K562 (cell line): ENCODE measurements at regions of chr6 and their contacts with region 1.

Region 1: DNA sequence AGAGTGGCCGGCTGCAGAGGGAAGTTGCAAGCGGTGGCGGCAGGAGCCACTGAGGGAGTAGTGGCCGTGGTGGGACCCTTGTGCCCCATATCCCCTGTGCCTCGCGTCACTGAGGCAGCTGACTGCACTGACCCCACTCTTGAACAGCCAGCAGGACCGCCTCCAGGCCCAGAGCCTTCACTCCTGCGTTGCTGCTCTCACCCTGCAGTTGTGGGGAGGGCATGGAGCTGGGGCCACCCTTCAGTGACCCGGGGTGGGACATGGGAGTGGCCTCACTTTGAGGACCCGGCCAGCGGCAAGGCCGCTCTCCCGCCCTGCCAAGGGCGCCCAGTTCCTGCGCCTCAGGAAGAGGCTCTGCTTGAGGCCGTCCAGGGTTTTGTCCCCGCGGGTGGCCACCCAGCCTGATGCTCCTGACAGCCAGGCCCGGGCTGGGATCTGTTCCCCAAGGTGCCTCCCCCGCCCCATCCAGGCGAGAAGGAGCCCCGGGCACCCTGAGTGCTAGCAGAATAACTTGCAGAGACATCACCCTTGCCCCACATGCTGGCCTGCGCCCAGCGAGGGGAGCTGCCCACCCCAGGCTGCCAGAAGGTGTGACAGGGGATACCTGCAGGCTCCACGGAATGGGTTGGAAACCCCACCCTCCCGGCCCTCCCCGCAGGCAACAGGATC is 44.4 kb downstream of the HLA-DRA start:
- DNase-seq: peak in 1 of 4 experiments; percentile 5
- ATAC-seq: peak; percentile 43; the same call in 1 of the 3 replicates
- H3K4me3 ChIP-seq: no peak overlapping the region
- H3K27ac ChIP-seq: no peak overlapping the region
- H3K4me1 ChIP-seq: peaks cover 0 to 5% of the 10 kb centered on the region in 2 experiments; a peak in 1 of 5 replicates
- H3K27me3 ChIP-seq: peaks cover 2 to 12% of the 10 kb centered on the region in 2 experiments; a peak in 2 of 5 replicates
- CTCF ChIP-seq: no peak
- EP300 ChIP-seq: no peak
- POLR2A ChIP-seq: no peak
- RAD21 ChIP-seq: no peak

Region 2: DNA sequence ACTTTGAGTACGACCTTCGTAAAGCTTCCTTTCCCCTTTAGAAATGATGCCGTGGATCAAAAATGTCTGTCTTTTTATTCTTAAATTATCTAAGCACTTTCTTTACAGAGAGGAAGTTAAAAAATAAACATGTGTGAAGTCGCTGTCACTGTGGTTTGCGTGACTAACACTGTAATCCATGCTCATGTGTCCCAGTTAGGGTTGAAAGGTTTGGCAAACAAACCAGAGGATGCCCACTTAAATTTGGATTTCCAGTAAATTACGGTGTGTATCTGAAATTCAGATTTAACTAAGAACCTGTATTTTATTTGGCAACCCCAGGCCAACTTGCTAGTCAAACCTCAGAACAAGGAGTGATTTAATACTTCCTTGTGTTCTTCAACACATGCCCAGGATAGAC is 84.5 kb after region 1 on chr6:
- CTCF ChIA-PET with region 1: no interaction called
- POLR2A ChIA-PET with region 1: no interaction called
- in situ Hi-C with region 1: loop called (anchors 5 kb)
- intact Hi-C with region 1: loop called (anchors 10 kb)
- DNase-seq: no peak
- ATAC-seq: no peak
- H3K4me3 ChIP-seq: no peak overlapping the region
- H3K27ac ChIP-seq: no peak overlapping the region
- H3K4me1 ChIP-seq: no peaks in the 10 kb centered on the region
- H3K27me3 ChIP-seq: no peaks in the 10 kb centered on the region
- CTCF ChIP-seq: no peak
- EP300 ChIP-seq: no peak
- POLR2A ChIP-seq: no peak
- RAD21 ChIP-seq: no peak

Region 3: GRCh38 chr6:32576250-32576649 is 92.1 kb after region 1 on chr6:
- CTCF ChIA-PET with region 1: no interaction called
- POLR2A ChIA-PET with region 1: no interaction called
- in situ Hi-C with region 1: no loop called
- intact Hi-C with region 1: loop called (anchors 10 kb)
- DNase-seq: no peak
- ATAC-seq: no peak
- H3K4me3 ChIP-seq: no peak overlapping the region
- H3K27ac ChIP-seq: no peak overlapping the region
- H3K4me1 ChIP-seq: no peaks in the 10 kb centered on the region
- H3K27me3 ChIP-seq: no peaks in the 10 kb centered on the region
- CTCF ChIP-seq: no peak
- EP300 ChIP-seq: no peak
- POLR2A ChIP-seq: no peak
- RAD21 ChIP-seq: no peak

Region 4: DNA sequence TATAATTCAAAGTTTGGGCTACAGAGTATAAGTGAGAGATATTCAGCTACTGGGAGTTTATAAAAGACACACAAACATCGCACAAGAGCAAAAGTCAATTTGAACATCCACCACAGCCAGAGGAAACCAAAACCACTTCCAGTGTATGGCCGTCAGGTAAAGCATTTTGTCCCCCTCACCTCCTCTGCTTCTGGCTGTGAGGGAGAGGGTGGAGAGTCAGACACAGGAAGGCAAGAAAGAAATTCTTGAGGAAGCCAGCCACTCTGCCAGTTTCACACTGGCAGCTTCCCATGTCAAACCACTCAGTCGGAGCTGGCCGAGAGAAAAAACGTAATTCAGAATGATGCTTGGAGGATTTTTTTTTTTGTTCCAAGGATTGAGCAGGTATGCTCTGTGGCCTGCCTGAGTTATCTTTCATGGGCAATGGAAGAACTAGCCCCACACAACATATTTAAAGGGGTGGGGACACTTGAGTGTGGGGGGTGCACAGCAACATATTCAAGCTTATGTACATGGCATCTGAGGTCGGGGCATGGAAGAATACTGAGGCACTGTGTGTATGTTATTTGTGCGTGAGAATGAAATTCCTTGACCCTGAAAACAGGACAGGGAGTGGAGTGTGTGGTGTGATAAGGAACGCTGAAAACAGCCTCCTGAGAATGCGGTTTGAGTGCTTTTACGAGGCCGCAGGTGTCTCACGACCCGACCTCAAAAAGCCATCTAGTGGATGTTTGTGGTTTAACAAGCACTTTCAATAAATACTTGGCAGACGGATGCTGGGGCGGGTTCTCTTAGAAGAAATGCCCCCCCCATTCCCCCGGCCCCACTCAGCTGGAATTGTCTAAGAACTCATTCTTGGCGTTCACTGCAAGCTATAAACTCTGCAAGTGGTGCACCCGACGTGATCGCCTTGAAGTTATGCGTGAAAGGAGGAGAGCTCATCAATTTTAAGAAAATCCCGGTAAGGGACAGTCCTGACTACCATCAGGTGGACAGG is 860.9 kb after region 1 on chr6:
- CTCF ChIA-PET with region 1: no interaction called
- POLR2A ChIA-PET with region 1: no interaction called
- in situ Hi-C with region 1: no loop called
- intact Hi-C with region 1: no loop called
- DNase-seq: peak; percentile 84 to 93 (median 84)
- ATAC-seq: peak; percentile 85
- H3K4me3 ChIP-seq: no peak overlapping the region
- H3K27ac ChIP-seq: peak overlapping the region; percentile 1; the same call in 1 of the 3 replicates
- H3K4me1 ChIP-seq: peaks cover 5 to 12% of the 10 kb centered on the region in 2 experiments; a peak in 3 of 5 replicates
- H3K27me3 ChIP-seq: no peaks in the 10 kb centered on the region
- CTCF ChIP-seq: peak; percentile 76 to 81 (median 80)
- EP300 ChIP-seq: peak; percentile 61
- POLR2A ChIP-seq: no peak
- RAD21 ChIP-seq: peak; percentile 72 to 83